Breast epithelium (tissue), 4 donors: ENCODE measurements at regions of chr18 and their contacts with region 1.

Region 1: DNA sequence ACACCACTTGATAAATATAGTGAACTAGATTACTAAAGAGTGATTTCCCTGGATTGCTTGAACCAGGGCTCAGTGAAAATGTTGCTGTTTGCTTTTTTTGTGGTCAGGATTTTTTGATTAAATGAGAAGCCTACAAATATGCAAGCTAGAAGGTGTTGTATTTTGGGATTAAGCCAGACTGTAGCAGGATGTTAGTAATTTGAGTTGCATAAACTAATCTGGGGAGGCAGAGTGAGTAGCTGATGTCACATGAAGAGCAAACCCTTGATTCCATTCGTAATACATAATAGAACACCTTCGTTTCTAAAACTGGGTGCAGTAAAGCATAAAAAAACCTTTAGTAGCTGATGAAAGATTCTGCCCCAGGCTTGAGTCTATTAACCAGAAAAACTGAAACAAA is 32.0 kb downstream of the NEDD4L start:
- DNase-seq: no peak
- H3K4me3 ChIP-seq: no peak overlapping the region
- H3K27ac ChIP-seq: peak overlapping the region in 1 of 2 donors; percentile 18
- H3K4me1 ChIP-seq: peaks cover 0 to 5% of the 10 kb centered on the region in 2 donors
- H3K27me3 ChIP-seq: no peaks in the 10 kb centered on the region
- CTCF ChIP-seq: no peak
- POLR2A ChIP-seq: no peak

Region 2: GRCh38 chr18:58148954-58149471 is 73.0 kb after region 1 on chr18:
- intact Hi-C with region 1: loop called (anchors 2 kb)
- DNase-seq: no peak
- H3K4me3 ChIP-seq: no peak overlapping the region
- H3K27ac ChIP-seq: peak overlapping the region in 1 of 2 donors; percentile 10
- H3K4me1 ChIP-seq: no peaks in the 10 kb centered on the region
- H3K27me3 ChIP-seq: no peaks in the 10 kb centered on the region
- CTCF ChIP-seq: no peak
- POLR2A ChIP-seq: no peak